CD8-positive, alpha-beta T cell (primary cell): ENCODE measurements at regions of chr16 and their contacts with region 1.

Region 1: GRCh38 chr16:4475880-4476788 is at the start of gene HMOX2:
- DNase-seq: peak; percentile 86 to 98 (median 93)
- ATAC-seq: peak; percentile 83
- H3K4me3 ChIP-seq: peak within 1 kb of the TSS; percentile 85 to 98
- H3K4me3 Mint-ChIP-seq: peak within 1 kb of the TSS; percentile 90
- H3K27ac ChIP-seq: peak within 1 kb of the TSS; percentile 72 to 85
- H3K27ac Mint-ChIP-seq: peak within 1 kb of the TSS; percentile 92
- H3K4me1 ChIP-seq: peaks cover 38% of the 10 kb centered on the region
- H3K4me1 Mint-ChIP-seq: peaks cover 46% of the 10 kb centered on the region
- H3K27me3 ChIP-seq: no peaks in the 10 kb centered on the region
- H3K27me3 Mint-ChIP-seq: no peaks in the 10 kb centered on the region
- CTCF ChIP-seq: no peak
- total RNA-seq, gene HMOX2: 31.7 to 36.4 TPM

Region 2: GRCh38 chr16:4416200-4417032 is 59.7 kb before region 1 on chr16 and contains the start of gene CORO7:
- CTCF ChIA-PET with region 1: interaction called, 4 read pairs
- POLR2A ChIA-PET with region 1: interaction called, 5 read pairs
- intact Hi-C with region 1: loop called (anchors 1 to 2 kb)
- DNase-seq: peak; percentile 98 to 100 (median 99)
- ATAC-seq: peak; percentile 78
- H3K4me3 ChIP-seq: peak within 1 kb of the TSS; percentile 51 to 60
- H3K4me3 Mint-ChIP-seq: peak within 1 kb of the TSS; percentile 97
- H3K27ac ChIP-seq: peak within 1 kb of the TSS; percentile 89 to 94
- H3K27ac Mint-ChIP-seq: peak within 1 kb of the TSS; percentile 99
- H3K4me1 ChIP-seq: peaks cover 44% of the 10 kb centered on the region
- H3K4me1 Mint-ChIP-seq: peaks cover 33% of the 10 kb centered on the region
- H3K27me3 ChIP-seq: no peaks in the 10 kb centered on the region
- H3K27me3 Mint-ChIP-seq: no peaks in the 10 kb centered on the region
- CTCF ChIP-seq: no peak
- total RNA-seq, gene CORO7: 950 to 991 TPM

Region 3: GRCh38 chr16:4487955-4488498 is 11.9 kb after region 1 on chr16:
- CTCF ChIA-PET with region 1: interaction called, 24 read pairs
- POLR2A ChIA-PET with region 1: interaction called, 10 read pairs
- intact Hi-C with region 1: loop called in 1 of 2 experiments (anchors 1 kb)
- DNase-seq: peak in 2 of 9 experiments; percentile 29 to 57
- ATAC-seq: peak; percentile 41
- H3K4me3 ChIP-seq: peak overlapping the region in 1 of 2 experiments; percentile 42
- H3K4me3 Mint-ChIP-seq: peak overlapping the region; percentile 70
- H3K27ac ChIP-seq: peak overlapping the region; percentile 79 to 83
- H3K27ac Mint-ChIP-seq: peak overlapping the region; percentile 96
- H3K4me1 ChIP-seq: peaks cover 77% of the 10 kb centered on the region
- H3K4me1 Mint-ChIP-seq: peaks cover 60% of the 10 kb centered on the region
- H3K27me3 ChIP-seq: no peaks in the 10 kb centered on the region
- H3K27me3 Mint-ChIP-seq: no peaks in the 10 kb centered on the region
- CTCF ChIP-seq: no peak

Region 4: GRCh38 chr16:4538350-4539235 is 62.5 kb after region 1 on chr16 and contains the start of gene CDIP1:
- CTCF ChIA-PET with region 1: interaction called, 5 read pairs
- POLR2A ChIA-PET with region 1: interaction called, 3 read pairs
- intact Hi-C with region 1: loop called (anchors 1 to 2 kb)
- DNase-seq: peak; percentile 88 to 98 (median 94)
- ATAC-seq: peak; percentile 86
- H3K4me3 ChIP-seq: peak within 1 kb of the TSS; percentile 71
- H3K4me3 Mint-ChIP-seq: peak within 1 kb of the TSS; percentile 80
- H3K27ac ChIP-seq: peak within 1 kb of the TSS; percentile 86 to 90
- H3K27ac Mint-ChIP-seq: peak within 1 kb of the TSS; percentile 92
- H3K4me1 ChIP-seq: peaks cover 45% of the 10 kb centered on the region
- H3K4me1 Mint-ChIP-seq: peaks cover 39% of the 10 kb centered on the region
- H3K27me3 ChIP-seq: no peaks in the 10 kb centered on the region
- H3K27me3 Mint-ChIP-seq: no peaks in the 10 kb centered on the region
- CTCF ChIP-seq: no peak
- total RNA-seq, gene CDIP1: 21.7 to 25.0 TPM

Region 5: DNA sequence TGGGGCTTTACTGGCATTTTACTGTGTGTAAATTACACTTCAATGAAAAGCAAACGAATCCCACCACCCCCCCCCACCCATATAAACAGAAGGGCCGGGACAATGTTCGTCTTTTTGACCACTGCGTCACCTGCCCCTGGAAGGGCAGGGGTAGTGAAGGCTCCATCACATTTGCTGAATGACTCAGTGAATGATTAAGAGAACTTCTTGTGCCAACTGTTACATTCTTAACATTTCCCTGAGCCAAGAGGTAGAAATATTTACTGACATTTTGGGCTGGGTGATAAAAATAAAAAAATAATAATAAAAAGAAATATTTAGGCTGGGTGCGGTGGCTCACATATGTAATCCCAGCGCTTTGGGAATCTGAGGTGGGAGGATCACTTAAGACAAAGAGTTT is 104.1 kb after region 1 on chr16:
- CTCF ChIA-PET with region 1: no interaction called
- POLR2A ChIA-PET with region 1: no interaction called
- intact Hi-C with region 1: no loop called
- DNase-seq: no peak
- ATAC-seq: no peak
- H3K4me3 ChIP-seq: no peak overlapping the region
- H3K4me3 Mint-ChIP-seq: no peak overlapping the region
- H3K27ac ChIP-seq: no peak overlapping the region
- H3K27ac Mint-ChIP-seq: no peak overlapping the region
- H3K4me1 ChIP-seq: peaks cover 1% of the 10 kb centered on the region
- H3K4me1 Mint-ChIP-seq: no peaks in the 10 kb centered on the region
- H3K27me3 ChIP-seq: no peaks in the 10 kb centered on the region
- H3K27me3 Mint-ChIP-seq: no peaks in the 10 kb centered on the region
- CTCF ChIP-seq: no peak

Region 6: GRCh38 chr16:4766874-4767628 is 290.9 kb after region 1 on chr16 and contains the start of gene ZNF500:
- CTCF ChIA-PET with region 1: no interaction called
- POLR2A ChIA-PET with region 1: no interaction called
- intact Hi-C with region 1: loop called in 1 of 2 experiments (anchors 10 kb)
- DNase-seq: peak; percentile 89 to 98 (median 96)
- ATAC-seq: peak; percentile 90
- H3K4me3 ChIP-seq: peak within 1 kb of the TSS; percentile 77 to 83
- H3K4me3 Mint-ChIP-seq: peak within 1 kb of the TSS; percentile 91
- H3K27ac ChIP-seq: peak within 1 kb of the TSS; percentile 67 to 77
- H3K27ac Mint-ChIP-seq: peak within 1 kb of the TSS; percentile 81
- H3K4me1 ChIP-seq: peaks cover 22% of the 10 kb centered on the region
- H3K4me1 Mint-ChIP-seq: peaks cover 45% of the 10 kb centered on the region
- H3K27me3 ChIP-seq: no peaks in the 10 kb centered on the region
- H3K27me3 Mint-ChIP-seq: no peaks in the 10 kb centered on the region
- CTCF ChIP-seq: no peak
- total RNA-seq, gene ZNF500: 12.1 to 15.9 TPM